ENCODE measurements at regions of chr12 and their contacts with region 1.

Region 1: GRCh38 chr12:401235-402028 is at the start of gene CCDC77:
- DNase-seq: peak; percentile 70
- H3K4me3 ChIP-seq: peak within 1 kb of the TSS; percentile 87
- H3K27ac ChIP-seq: peak within 1 kb of the TSS; percentile 57
- H3K27me3 ChIP-seq: no peaks in the 10 kb centered on the region
- CTCF ChIP-seq: peak; percentile 35
- polyA plus RNA-seq, gene CCDC77: 5.6 and 7.3 TPM in 2 replicates

Region 2: DNA sequence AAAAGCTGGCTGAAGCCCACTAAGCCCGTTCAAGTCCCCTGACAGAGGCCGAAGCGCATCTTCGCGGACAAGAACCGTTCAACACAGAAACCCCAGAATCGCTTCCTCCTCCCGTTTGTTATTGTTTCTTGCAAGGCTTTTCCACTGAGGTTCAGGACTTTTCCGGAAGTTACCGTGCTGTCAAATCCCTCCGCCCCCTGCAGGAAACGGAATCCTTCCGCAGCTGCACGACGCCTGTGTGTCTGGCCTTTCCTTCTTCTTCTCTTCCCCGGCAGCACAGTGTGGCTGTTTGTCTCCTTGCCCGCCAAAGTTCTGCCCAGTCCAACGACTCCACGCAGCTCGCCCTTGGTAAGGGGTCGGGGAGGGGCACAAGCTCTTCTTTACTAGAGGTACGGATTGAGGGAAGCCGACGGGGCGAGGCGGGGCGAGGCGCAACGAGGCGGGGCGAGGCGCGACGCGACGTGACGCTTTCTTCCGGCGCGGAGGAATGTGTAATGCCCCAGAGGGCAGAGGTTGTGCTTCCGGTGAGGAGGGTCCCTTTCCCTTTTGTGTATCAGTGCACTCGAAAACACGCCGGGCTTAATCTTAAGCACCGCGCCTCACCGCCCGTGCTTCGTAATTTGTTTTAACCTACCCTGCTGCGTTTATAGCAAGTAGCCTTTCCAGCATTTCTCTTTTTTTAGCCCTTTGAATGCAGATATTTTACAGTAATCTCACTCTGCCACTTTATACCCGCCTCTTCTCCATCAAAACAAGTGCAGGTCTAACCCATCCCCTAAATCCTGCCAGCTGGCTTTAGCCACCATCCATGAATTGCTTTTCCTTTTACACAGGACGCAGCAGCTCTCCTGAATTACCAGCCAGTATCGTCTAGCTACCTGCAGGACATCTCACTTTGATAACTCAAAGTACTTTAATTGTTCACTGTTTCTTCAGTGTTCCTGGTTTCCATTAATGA is 12.0 kb before region 1 on chr12 and contains the start of gene KDM5A:
- CTCF ChIA-PET with region 1: interaction called, 7 read pairs
- POLR2A ChIA-PET with region 1: interaction called, 16 read pairs
- DNase-seq: peak; percentile 90
- H3K4me3 ChIP-seq: peak within 1 kb of the TSS; percentile 93
- H3K27ac ChIP-seq: peak within 1 kb of the TSS; percentile 90
- H3K27me3 ChIP-seq: no peaks in the 10 kb centered on the region
- CTCF ChIP-seq: no peak
- polyA plus RNA-seq, gene KDM5A: 28.1 and 33.9 TPM in 2 replicates

Region 3: GRCh38 chr12:459430-460258 is 58.2 kb after region 1 on chr12 and contains the start of gene B4GALNT3:
- CTCF ChIA-PET with region 1: no interaction called
- POLR2A ChIA-PET with region 1: no interaction called
- DNase-seq: no peak
- H3K4me3 ChIP-seq: peak within 1 kb of the TSS; percentile 45
- H3K27ac ChIP-seq: no peak within 1 kb of the TSS
- H3K27me3 ChIP-seq: peaks cover 67% of the 10 kb centered on the region
- CTCF ChIP-seq: no peak
- polyA plus RNA-seq, gene B4GALNT3: not detected in 2 replicates